IMR-90 (cell line): ENCODE measurements at regions of chr14 and their contacts with region 1.

Region 1: GRCh38 chr14:73785873-73786695 is 65.5 kb upstream of the PTGR2 start:
- DNase-seq: peak; percentile 96
- ATAC-seq: peak; percentile 59
- H3K4me3 ChIP-seq: peak overlapping the region; percentile 65
- H3K27ac ChIP-seq: peak overlapping the region; percentile 98
- H3K4me1 ChIP-seq: peaks cover 36% of the 10 kb centered on the region
- H3K27me3 ChIP-seq: no peaks in the 10 kb centered on the region
- CTCF ChIP-seq: peak; percentile 29; the same call in 1 of the 2 replicates
- POLR2A ChIP-seq: peak; percentile 73
- RAD21 ChIP-seq: 0 out of 2 replicates have a peak, but pooled peaks have one; percentile 9

Region 2: DNA sequence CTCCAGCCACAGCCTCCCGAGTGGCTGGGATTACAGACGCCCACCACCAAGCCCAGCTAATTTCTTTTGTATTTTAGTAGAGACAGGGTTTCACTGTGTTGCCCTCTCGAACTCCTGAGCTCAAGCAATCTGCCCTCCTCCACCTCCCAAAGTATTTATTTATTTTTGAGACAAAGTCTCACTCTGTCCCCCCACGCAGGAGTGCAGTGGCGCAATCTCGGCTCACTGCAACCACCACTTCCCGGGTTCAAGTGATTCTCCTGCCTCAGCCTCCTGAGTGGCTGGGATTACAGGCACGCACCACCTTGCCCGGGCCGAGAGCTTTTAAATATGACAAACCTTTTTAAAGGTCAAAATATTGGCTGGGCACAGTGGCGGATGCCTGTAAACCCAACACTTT is 342.3 kb before region 1 on chr14:
- CTCF ChIA-PET with region 1: no interaction called
- POLR2A ChIA-PET with region 1: no interaction called
- dilution Hi-C with region 1: no loop called
- in situ Hi-C with region 1: no loop called
- intact Hi-C with region 1: no loop called
- DNase-seq: no peak
- ATAC-seq: no peak
- H3K4me3 ChIP-seq: no peak overlapping the region
- H3K27ac ChIP-seq: no peak overlapping the region
- H3K4me1 ChIP-seq: peaks cover 9% of the 10 kb centered on the region
- H3K27me3 ChIP-seq: no peaks in the 10 kb centered on the region
- CTCF ChIP-seq: no peak
- POLR2A ChIP-seq: no peak
- RAD21 ChIP-seq: no peak

Region 3: DNA sequence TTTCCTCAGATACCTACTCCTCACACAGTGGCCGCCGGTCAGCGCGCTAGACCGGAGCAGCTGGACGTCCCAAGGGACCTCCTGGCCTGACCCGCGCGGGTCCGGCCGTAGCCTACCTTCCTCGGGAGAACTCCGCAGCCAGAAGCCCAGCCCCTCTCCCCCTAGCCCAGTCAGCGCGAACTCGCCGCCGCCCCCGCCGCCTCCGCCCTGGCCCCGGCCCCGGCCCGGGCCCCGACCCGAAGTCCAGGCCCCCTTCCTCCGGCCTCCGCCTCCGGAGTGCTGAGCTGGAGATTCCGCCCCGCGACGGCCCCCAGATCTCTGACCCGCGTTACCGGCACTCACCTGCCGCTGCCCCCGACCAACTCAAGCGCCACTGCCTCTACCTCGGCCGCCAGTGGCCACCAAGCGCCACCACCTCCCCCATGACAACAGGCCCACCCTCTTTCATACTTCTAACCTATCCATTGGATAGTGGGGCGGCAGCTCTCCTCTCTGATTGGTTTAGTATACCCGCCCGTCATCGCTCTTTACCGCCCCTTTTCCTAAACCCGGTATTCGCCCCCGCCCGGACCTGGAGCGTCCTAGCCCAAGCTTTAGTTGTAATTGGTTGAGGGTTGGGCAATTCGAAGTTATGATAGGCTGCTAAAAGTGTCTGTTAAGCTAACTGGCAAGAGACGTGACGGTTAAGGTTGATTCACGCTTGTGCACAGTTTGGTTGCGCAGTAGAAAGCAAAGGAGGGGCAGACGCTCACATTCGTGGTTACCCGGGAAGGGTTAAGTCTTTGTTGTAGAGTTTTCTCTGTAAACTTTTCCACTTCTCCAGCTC is 327.7 kb before region 1 on chr14 and contains the start of gene NUMB:
- CTCF ChIA-PET with region 1: no interaction called
- POLR2A ChIA-PET with region 1: no interaction called
- dilution Hi-C with region 1: no loop called
- in situ Hi-C with region 1: no loop called
- intact Hi-C with region 1: no loop called
- DNase-seq: peak; percentile 100
- ATAC-seq: peak; percentile 95
- H3K4me3 ChIP-seq: peak within 1 kb of the TSS; percentile 93
- H3K27ac ChIP-seq: peak within 1 kb of the TSS; percentile 92
- H3K4me1 ChIP-seq: peaks cover 13% of the 10 kb centered on the region
- H3K27me3 ChIP-seq: no peaks in the 10 kb centered on the region
- CTCF ChIP-seq: no peak
- POLR2A ChIP-seq: peak; percentile 77
- RAD21 ChIP-seq: no peak
- total RNA-seq, gene NUMB: 41.7 and 45.9 TPM in 2 replicates

Region 4: GRCh38 chr14:73568381-73568781 is 217.7 kb before region 1 on chr14:
- CTCF ChIA-PET with region 1: no interaction called
- POLR2A ChIA-PET with region 1: no interaction called
- dilution Hi-C with region 1: no loop called
- in situ Hi-C with region 1: no loop called
- intact Hi-C with region 1: no loop called
- DNase-seq: peak; percentile 41
- ATAC-seq: no peak
- H3K4me3 ChIP-seq: peak overlapping the region; percentile 70; the same call in 1 of the 2 replicates
- H3K27ac ChIP-seq: peak overlapping the region; percentile 92
- H3K4me1 ChIP-seq: peaks cover 9% of the 10 kb centered on the region; the same call in 1 of the 2 replicates
- H3K27me3 ChIP-seq: no peaks in the 10 kb centered on the region
- CTCF ChIP-seq: no peak
- POLR2A ChIP-seq: no peak
- RAD21 ChIP-seq: no peak

Region 5: GRCh38 chr14:73753959-73754882 is 31.9 kb before region 1 on chr14:
- CTCF ChIA-PET with region 1: no interaction called
- POLR2A ChIA-PET with region 1: interaction called, 7 read pairs
- dilution Hi-C with region 1: no loop called
- in situ Hi-C with region 1: no loop called
- intact Hi-C with region 1: loop called (anchors 5 kb)
- DNase-seq: no peak
- ATAC-seq: no peak
- H3K4me3 ChIP-seq: no peak overlapping the region
- H3K27ac ChIP-seq: peak overlapping the region; percentile 53
- H3K4me1 ChIP-seq: peaks cover 70% of the 10 kb centered on the region
- H3K27me3 ChIP-seq: no peaks in the 10 kb centered on the region
- CTCF ChIP-seq: no peak
- POLR2A ChIP-seq: no peak
- RAD21 ChIP-seq: no peak

Region 6: DNA sequence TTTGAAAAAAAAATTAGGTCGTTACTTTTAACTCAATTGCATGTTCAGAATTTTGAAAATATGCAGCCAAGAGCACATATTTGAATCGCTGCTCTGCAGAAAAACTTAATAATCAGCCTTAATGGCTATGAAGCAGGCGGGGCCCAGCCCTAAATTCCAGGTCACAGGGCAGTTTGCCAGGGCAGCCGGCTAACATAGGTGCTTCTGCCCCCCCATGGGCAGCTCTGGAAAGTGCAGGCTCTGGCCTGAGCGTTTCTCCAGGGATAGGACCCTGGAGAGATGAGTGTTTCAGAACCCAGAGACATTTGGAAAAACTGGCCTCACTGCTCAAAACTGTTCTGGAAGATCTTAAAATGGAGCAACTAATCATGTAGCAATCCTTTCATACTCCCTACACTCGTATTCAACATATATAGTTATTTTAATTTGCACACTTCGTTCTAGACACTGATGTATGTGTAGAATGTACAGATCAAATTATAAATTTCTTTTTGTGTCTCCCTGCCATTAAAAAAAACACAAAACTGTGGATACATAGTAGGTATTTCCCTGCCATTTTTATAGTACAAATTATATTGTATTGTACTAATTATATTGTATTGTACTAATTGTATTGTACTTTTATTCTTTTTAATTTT is 39.6 kb after region 1 on chr14:
- CTCF ChIA-PET with region 1: interaction called, 3 read pairs
- POLR2A ChIA-PET with region 1: no interaction called
- dilution Hi-C with region 1: no loop called
- in situ Hi-C with region 1: no loop called
- intact Hi-C with region 1: loop called (anchors 1 kb)
- DNase-seq: peak; percentile 78
- ATAC-seq: peak; percentile 98
- H3K4me3 ChIP-seq: no peak overlapping the region
- H3K27ac ChIP-seq: no peak overlapping the region
- H3K4me1 ChIP-seq: no peaks in the 10 kb centered on the region
- H3K27me3 ChIP-seq: no peaks in the 10 kb centered on the region; the same call in 1 of the 2 replicates
- CTCF ChIP-seq: peak; percentile 88
- POLR2A ChIP-seq: no peak
- RAD21 ChIP-seq: peak; percentile 89

Region 7: DNA sequence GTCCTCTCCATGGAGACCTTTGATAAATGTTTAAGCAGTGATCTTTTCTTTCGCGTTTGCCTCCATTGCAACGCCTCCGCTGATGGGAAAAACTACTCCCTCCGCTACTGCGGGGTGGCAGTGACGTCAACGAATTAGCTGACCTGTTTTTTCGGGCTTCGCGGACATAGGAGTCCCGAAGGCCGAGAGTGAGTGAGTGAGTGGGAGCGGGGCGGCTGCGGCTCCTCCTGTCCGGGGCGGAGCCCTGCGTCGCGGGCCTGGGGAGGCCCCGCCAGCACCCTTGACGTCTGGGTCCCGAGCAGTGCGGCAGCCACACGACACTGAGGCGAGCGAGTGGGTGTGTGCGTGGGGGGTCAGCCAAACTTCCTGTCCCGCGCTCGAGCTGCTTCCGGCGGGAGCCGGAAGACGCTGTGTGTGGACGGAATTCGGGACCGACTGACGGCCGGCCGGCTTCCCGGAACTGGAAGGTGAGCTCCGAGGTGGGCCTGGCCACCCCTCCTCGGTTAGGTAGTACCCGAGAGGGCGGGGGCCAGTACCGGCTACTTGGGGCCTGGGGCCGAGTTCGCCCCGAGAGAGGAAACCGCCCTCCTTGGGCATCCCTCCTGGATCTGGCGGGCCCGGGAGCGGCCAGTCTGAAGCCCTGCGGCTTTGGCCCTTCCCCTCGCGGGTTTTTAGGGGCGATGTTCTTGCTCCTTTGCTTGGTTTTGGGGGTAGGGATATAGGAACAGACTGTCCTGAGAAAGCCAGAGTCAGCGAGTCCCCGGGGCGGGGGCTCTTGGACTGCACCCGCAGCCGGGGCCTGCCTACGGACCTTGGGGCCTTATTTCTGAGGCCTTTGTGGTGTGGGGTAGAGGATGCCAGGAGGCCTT is 100.6 kb after region 1 on chr14 and contains the start of gene ZNF410:
- CTCF ChIA-PET with region 1: no interaction called
- POLR2A ChIA-PET with region 1: no interaction called
- dilution Hi-C with region 1: no loop called
- in situ Hi-C with region 1: no loop called
- intact Hi-C with region 1: loop called (anchors 2 kb)
- DNase-seq: peak; percentile 98
- ATAC-seq: peak; percentile 99
- H3K4me3 ChIP-seq: peak within 1 kb of the TSS; percentile 56
- H3K27ac ChIP-seq: peak within 1 kb of the TSS; percentile 81
- H3K4me1 ChIP-seq: peaks cover 2% of the 10 kb centered on the region; the same call in 1 of the 2 replicates
- H3K27me3 ChIP-seq: no peaks in the 10 kb centered on the region
- CTCF ChIP-seq: no peak
- POLR2A ChIP-seq: peak; percentile 85
- RAD21 ChIP-seq: no peak
- total RNA-seq, gene ZNF410: 73.9 and 89.1 TPM in 2 replicates